ENCODE measurements at regions of chr7 and their contacts with region 1.

Region 1: DNA sequence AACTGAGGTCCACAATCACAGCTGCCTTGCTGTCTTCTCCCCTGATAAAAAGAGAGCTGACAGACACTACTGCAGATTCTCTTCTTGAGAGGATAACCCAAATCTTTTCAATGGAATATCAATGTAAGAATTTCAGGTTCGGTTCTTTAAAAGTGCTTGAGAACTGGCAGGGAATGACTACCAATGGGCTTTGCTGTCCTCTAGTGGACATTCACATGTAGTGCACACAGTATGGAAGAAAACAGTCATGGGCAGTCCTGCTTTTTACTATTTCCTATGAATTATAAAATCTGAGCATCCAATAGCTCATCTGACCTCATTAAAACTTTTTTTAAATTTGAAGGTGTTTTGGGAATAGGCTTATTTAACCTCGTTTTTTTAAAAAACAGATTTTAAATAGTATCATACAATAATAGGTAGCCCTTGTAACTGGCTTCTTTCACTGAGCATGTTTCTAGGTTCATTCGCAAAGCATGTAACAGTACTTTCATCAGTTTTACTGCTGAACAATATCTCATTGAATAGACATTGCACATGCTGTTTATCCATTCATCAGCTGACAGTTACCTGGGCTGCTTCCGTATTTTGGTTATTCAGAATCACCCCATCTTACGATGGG is 18.3 kb downstream of the FZD9 start:
- DNase-seq: no peak
- H3K4me3 Mint-ChIP-seq: no peak overlapping the region
- H3K27ac Mint-ChIP-seq: no peak overlapping the region
- H3K4me1 Mint-ChIP-seq: peaks cover 4% of the 10 kb centered on the region
- H3K27me3 Mint-ChIP-seq: no peaks in the 10 kb centered on the region

Region 2: GRCh38 chr7:73329861-73330581 is 121.9 kb before region 1 on chr7:
- CTCF ChIA-PET with region 1: interaction called, 22 read pairs
- POLR2A ChIA-PET with region 1: no interaction called
- intact Hi-C with region 1: no loop called
- DNase-seq: no peak
- H3K4me3 Mint-ChIP-seq: no peak overlapping the region
- H3K27ac Mint-ChIP-seq: no peak overlapping the region
- H3K4me1 Mint-ChIP-seq: no peaks in the 10 kb centered on the region
- H3K27me3 Mint-ChIP-seq: no peaks in the 10 kb centered on the region

Region 3: GRCh38 chr7:73433924-73434700 is 17.8 kb before region 1 on chr7:
- CTCF ChIA-PET with region 1: interaction called, 26 read pairs
- POLR2A ChIA-PET with region 1: no interaction called
- intact Hi-C with region 1: no loop called
- DNase-seq: peak; percentile 16
- H3K4me3 Mint-ChIP-seq: no peak overlapping the region
- H3K27ac Mint-ChIP-seq: no peak overlapping the region
- H3K4me1 Mint-ChIP-seq: peaks cover 2% of the 10 kb centered on the region
- H3K27me3 Mint-ChIP-seq: peaks cover 3% of the 10 kb centered on the region

Region 4: DNA sequence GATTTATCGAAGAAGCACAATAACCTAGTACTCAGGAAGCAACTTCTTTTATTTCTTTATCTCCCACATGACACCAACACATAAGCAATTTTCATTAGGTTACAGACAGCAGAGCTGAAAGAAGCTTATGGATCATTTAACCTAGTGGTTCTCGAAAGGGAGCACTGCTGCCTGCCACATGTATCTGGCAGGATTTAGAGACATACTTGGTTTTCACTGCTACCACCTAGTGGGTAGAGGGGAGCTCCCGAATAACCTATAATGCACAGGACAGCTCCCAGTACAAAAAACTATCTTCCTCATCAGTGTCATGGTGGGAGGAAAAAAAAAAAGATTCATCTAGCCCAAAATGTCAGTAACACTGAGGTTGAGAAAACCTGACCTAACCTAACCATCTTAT is 16.2 kb after region 1 on chr7:
- CTCF ChIA-PET with region 1: interaction called, 18 read pairs
- POLR2A ChIA-PET with region 1: no interaction called
- intact Hi-C with region 1: no loop called
- DNase-seq: no peak
- H3K4me3 Mint-ChIP-seq: no peak overlapping the region
- H3K27ac Mint-ChIP-seq: no peak overlapping the region
- H3K4me1 Mint-ChIP-seq: no peaks in the 10 kb centered on the region
- H3K27me3 Mint-ChIP-seq: no peaks in the 10 kb centered on the region

Region 5: DNA sequence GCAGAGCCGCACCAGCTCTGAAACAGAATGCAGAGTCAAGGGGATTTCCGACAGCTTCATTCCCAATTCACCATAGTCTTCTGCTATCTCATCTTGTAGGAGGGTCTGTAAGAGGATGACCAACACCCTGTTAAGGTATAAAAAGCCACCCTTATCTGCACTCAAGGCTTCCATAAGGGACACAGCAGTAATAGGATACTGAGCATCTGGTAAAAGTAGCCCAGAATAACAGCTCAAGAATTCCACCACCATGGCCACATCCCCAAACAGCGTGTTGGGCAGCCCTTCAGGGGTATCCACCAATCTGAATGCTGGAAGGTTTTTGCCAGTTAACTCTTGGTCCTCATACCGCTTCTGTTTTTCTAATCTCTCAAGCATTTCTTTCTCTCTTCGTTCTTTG is 25.5 kb after region 1 on chr7:
- CTCF ChIA-PET with region 1: interaction called, 10 read pairs
- POLR2A ChIA-PET with region 1: no interaction called
- intact Hi-C with region 1: loop called (anchors 2 kb)
- DNase-seq: no peak
- H3K4me3 Mint-ChIP-seq: no peak overlapping the region
- H3K27ac Mint-ChIP-seq: no peak overlapping the region
- H3K4me1 Mint-ChIP-seq: peaks cover 16% of the 10 kb centered on the region
- H3K27me3 Mint-ChIP-seq: no peaks in the 10 kb centered on the region

Region 6: GRCh38 chr7:73623798-73624668 is 172.1 kb after region 1 on chr7 and contains the start of gene MLXIPL:
- CTCF ChIA-PET with region 1: no interaction called
- POLR2A ChIA-PET with region 1: no interaction called
- intact Hi-C with region 1: no loop called
- DNase-seq: peak; percentile 74
- H3K4me3 Mint-ChIP-seq: no peak within 1 kb of the TSS
- H3K27ac Mint-ChIP-seq: no peak within 1 kb of the TSS
- H3K4me1 Mint-ChIP-seq: peaks cover 6% of the 10 kb centered on the region
- H3K27me3 Mint-ChIP-seq: peaks cover 37% of the 10 kb centered on the region
- total RNA-seq, gene MLXIPL: not detected